ENCODE measurements at regions of chr9 and their contacts with region 1.

Region 1: GRCh38 chr9:95510709-95511615 is 5.8 kb downstream of the PTCH1 start:
- DNase-seq: peak; percentile 95
- H3K4me3 ChIP-seq: peak overlapping the region; percentile 87 to 94
- H3K27ac ChIP-seq: peak overlapping the region; percentile 89 to 95
- H3K4me1 ChIP-seq: peaks cover 5% of the 10 kb centered on the region
- H3K27me3 ChIP-seq: no peaks in the 10 kb centered on the region
- CTCF ChIP-seq: no peak
- POLR2A ChIP-seq: peak; percentile 69

Region 2: DNA sequence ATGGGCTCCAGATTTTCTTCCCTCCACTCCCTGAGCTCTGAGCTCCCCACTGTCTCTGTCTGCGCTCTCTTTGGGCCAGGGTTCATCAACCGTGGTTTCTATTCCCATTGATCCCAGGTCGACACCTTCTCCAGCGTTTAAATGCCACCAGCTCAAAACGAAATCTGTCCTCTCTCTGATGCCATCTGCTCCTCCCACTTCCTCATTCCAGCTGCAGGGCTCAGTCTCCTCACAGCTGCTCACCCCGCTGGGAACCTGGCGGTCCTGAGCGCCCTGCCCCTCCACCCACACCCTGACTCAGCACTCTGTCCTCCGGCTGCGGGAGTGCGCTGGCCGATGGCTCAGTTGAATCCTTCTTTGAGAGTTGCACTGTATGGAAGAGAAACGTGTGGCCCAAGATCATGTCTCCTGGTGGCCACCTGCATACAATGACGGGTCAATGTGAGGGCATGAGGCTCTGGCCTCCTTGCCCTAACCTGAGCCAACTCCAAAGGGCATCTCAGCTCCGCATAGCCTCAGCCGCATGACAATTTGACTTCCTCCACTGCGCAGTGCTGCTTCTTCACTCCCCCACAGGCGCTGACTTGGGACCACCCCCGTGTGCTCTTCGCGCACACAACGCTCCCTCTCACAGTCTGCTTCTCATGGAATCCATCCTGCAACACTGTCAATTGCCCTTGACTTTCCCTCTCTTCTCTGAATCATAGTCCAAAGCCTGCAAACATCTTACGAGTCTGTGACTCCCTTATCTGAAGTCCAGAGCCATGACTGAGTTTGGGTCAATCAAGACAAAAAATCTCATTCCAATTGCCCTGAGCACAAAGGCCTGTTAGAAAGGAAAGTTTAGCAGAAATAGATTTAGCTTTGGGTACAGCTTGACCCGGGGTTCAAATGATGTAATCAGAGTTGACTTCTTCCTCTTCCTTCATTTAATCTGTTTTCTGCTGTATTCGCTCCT is 76.6 kb before region 1 on chr9:
- intact Hi-C with region 1: no loop called
- DNase-seq: no peak
- H3K4me3 ChIP-seq: peak overlapping the region in 1 of 2 donors; percentile 44
- H3K27ac ChIP-seq: no peak overlapping the region
- H3K4me1 ChIP-seq: no peaks in the 10 kb centered on the region
- H3K27me3 ChIP-seq: no peaks in the 10 kb centered on the region
- CTCF ChIP-seq: no peak
- POLR2A ChIP-seq: no peak

Region 3: GRCh38 chr9:95641586-95641985 is 130.6 kb after region 1 on chr9:
- intact Hi-C with region 1: no loop called
- DNase-seq: peak; percentile 36
- H3K4me3 ChIP-seq: no peak overlapping the region
- H3K27ac ChIP-seq: no peak overlapping the region
- H3K4me1 ChIP-seq: no peaks in the 10 kb centered on the region
- H3K27me3 ChIP-seq: no peaks in the 10 kb centered on the region
- CTCF ChIP-seq: no peak
- POLR2A ChIP-seq: no peak

Region 4: DNA sequence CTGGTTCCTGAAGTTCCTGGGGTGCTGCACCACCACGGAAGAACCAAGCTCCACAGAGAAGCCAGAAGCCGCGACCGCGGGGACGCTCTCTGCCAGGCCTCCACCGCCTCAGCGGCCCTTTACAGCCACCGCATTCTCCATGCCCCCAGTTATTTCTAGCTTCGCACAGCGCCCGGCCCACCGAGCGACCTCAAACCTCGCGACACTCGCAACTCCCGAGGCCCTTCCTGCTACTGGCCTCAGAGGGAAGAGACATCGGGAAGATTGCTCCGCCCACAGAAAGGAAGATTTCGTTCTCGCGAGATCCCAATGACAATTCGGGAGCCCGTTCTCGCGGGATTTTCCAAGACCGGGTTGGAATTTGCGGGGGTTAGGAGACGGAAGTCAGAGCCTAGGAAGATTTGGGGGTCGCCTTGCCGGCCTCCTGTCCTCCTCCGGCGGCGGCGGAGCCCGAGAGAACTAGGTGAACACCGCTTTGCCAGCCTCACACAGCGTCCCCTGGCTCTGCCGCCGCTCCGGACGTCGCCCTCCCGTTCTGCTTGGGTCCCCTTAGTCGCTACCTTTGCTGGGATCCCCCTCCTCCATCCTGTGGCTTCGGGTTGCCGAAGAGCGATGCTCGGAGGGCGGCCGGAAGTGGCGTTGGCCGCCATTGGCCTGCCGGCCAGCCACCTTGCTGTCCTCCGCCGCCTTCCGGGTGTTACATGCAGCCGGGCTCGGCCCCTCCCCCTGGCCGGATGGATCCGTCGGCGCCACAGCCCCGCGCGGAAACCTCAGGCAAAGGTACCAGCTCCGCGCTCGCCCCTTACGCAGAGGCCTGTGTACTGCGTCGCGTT is 364.6 kb after region 1 on chr9 and contains the start of gene ERCC6L2:
- intact Hi-C with region 1: loop called (anchors 10 kb)
- DNase-seq: peak; percentile 98
- H3K4me3 ChIP-seq: no peak within 1 kb of the TSS
- H3K27ac ChIP-seq: peak within 1 kb of the TSS in 1 of 2 donors; percentile 100
- H3K4me1 ChIP-seq: peaks cover 11% of the 10 kb centered on the region
- H3K27me3 ChIP-seq: no peaks in the 10 kb centered on the region
- CTCF ChIP-seq: no peak
- POLR2A ChIP-seq: no peak
- total RNA-seq, gene ERCC6L2: 83.9 to 100 TPM

Measured in testis (tissue), 5 donors.